Panc1 (cell line): ENCODE measurements at regions of chr7 and their contacts with region 1.

Region 1: GRCh38 chr7:22651534-22652243 is 75.3 kb upstream of the IL6 start:
- DNase-seq: no peak
- ATAC-seq: no peak
- H3K4me3 ChIP-seq: no peak overlapping the region
- H3K27ac ChIP-seq: no peak overlapping the region
- H3K4me1 ChIP-seq: no peaks in the 10 kb centered on the region
- H3K27me3 ChIP-seq: no peaks in the 10 kb centered on the region
- CTCF ChIP-seq: no peak

Region 2: GRCh38 chr7:22675917-22676343 is 24.2 kb after region 1 on chr7:
- CTCF ChIA-PET with region 1: no interaction called
- POLR2A ChIA-PET with region 1: interaction called, 14 read pairs
- in situ Hi-C with region 1: no loop called
- intact Hi-C with region 1: no loop called
- DNase-seq: no peak
- ATAC-seq: no peak
- H3K4me3 ChIP-seq: no peak overlapping the region
- H3K27ac ChIP-seq: no peak overlapping the region
- H3K4me1 ChIP-seq: peaks cover 3% of the 10 kb centered on the region; the same call in 1 of the 2 replicates
- H3K27me3 ChIP-seq: no peaks in the 10 kb centered on the region
- CTCF ChIP-seq: no peak

Region 3: GRCh38 chr7:22782616-22783232 is 131.0 kb after region 1 on chr7:
- CTCF ChIA-PET with region 1: no interaction called
- POLR2A ChIA-PET with region 1: no interaction called
- in situ Hi-C with region 1: no loop called
- intact Hi-C with region 1: no loop called
- DNase-seq: peak; percentile 53
- ATAC-seq: peak; percentile 93
- H3K4me3 ChIP-seq: no peak overlapping the region
- H3K27ac ChIP-seq: no peak overlapping the region
- H3K4me1 ChIP-seq: no peaks in the 10 kb centered on the region
- H3K27me3 ChIP-seq: no peaks in the 10 kb centered on the region
- CTCF ChIP-seq: peak; percentile 95